Activated CD4-positive, alpha-beta memory T cell treated with anti-CD3 and anti-CD28 coated beads, Interleukin-2, amount 10 ng/mL, durations not matched to agents 7 days and 5 days (primary cell): ENCODE measurements at regions of chr6 and their contacts with region 1.

Region 1: GRCh38 chr6:5302995-5303622 is 41.8 kb downstream of the FARS2 start:
- DNase-seq: peak; percentile 78
- H3K4me3 Mint-ChIP-seq: peak overlapping the region; percentile 62
- H3K27ac Mint-ChIP-seq: peak overlapping the region; percentile 87
- H3K4me1 Mint-ChIP-seq: peaks cover 47% of the 10 kb centered on the region
- H3K27me3 Mint-ChIP-seq: no peaks in the 10 kb centered on the region

Region 2: GRCh38 chr6:5174244-5174643 is 128.9 kb before region 1 on chr6:
- CTCF ChIA-PET with region 1: interaction called, 15 read pairs
- POLR2A ChIA-PET with region 1: interaction called, 20 read pairs
- DNase-seq: peak; percentile 79
- H3K4me3 Mint-ChIP-seq: peak overlapping the region; percentile 57
- H3K27ac Mint-ChIP-seq: peak overlapping the region; percentile 89
- H3K4me1 Mint-ChIP-seq: peaks cover 50% of the 10 kb centered on the region
- H3K27me3 Mint-ChIP-seq: no peaks in the 10 kb centered on the region

Region 3: GRCh38 chr6:5214570-5215052 is 88.5 kb before region 1 on chr6:
- CTCF ChIA-PET with region 1: interaction called, 12 read pairs
- POLR2A ChIA-PET with region 1: interaction called, 6 read pairs
- DNase-seq: peak; percentile 42
- H3K4me3 Mint-ChIP-seq: no peak overlapping the region
- H3K27ac Mint-ChIP-seq: no peak overlapping the region
- H3K4me1 Mint-ChIP-seq: peaks cover 9% of the 10 kb centered on the region
- H3K27me3 Mint-ChIP-seq: no peaks in the 10 kb centered on the region

Region 4: DNA sequence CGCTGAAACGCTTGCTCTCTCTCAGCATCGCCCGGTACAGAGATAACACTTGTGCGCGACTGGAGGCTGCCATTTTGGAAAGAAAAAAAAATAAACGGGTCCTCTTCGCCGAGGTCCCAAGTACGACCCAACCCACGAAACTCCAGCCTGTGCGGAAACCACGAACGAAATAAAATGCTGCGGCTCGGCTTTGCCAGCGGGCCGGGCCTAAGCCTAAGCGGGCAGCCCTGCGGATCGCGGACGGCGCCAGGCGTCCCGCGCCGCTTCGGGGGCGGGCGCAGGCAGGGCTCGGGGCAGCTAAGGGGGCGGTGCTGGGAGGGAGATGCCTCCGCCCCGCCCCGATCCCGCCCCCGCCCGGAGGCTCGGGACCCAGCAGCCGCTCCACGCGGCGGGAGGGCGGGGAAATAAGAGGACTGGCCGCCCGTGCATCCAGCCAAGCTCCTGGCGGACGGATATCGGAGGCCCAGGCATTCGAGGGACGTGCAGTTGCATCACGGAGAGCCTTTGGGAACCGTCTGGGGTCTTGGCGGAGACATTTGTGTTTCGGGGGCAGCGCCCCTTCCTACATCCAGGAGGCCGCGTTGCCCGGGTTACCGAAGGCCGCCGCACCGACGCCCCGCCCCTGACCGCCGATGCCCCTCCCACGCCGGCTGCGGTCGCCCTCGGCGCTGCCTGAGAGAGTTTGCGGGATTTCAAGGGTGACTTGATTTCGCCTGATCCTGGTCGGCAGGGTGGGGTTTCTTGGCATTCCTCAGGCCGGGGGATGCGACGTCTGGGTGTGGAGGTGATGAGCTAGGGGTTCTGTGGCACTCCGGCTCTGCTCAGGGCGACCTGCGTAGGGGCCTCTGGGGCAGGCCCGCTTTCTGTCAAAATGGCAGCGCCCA is 42.2 kb before region 1 on chr6 and contains the starts of genes FARS2 and LYRM4:
- CTCF ChIA-PET with region 1: interaction called, 15 read pairs
- POLR2A ChIA-PET with region 1: interaction called, 50 read pairs
- DNase-seq: peak; percentile 91
- H3K4me3 Mint-ChIP-seq: peak within 1 kb of the TSS; percentile 99
- H3K27ac Mint-ChIP-seq: peak within 1 kb of the TSS; percentile 96
- H3K4me1 Mint-ChIP-seq: peaks cover 60% of the 10 kb centered on the region
- H3K27me3 Mint-ChIP-seq: no peaks in the 10 kb centered on the region
- total RNA-seq, gene FARS2: 17.6 to 18.7 TPM
- total RNA-seq, gene LYRM4: 21.2 to 22.7 TPM

Region 5: DNA sequence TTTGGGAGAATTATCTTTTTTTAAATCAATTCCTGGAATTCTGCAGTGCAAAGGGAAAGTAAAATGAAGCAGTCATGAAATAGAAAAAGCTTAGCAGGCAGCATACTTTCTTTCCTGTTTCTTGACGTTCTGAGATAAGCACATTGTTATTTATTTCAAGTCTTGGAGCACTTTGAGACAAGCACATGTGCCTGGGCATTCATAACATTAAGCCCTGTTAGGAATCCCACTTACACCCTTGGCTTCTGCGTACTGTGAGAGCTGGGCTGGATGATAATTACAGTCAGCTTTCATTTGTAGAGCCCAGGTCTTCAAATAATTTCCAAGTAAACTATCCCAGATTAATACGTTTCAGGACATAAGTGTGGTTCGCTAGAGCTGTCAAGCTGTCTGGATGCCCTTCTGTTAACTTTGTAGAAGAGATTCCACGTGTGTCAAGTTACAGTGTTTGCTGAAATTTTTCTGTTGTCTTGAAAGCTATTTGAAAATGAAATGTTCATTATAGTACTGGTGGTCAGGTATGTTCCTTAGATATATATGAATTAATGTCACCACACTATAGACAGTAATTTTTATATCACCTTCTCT is 32.9 kb before region 1 on chr6:
- CTCF ChIA-PET with region 1: interaction called, 19 read pairs
- POLR2A ChIA-PET with region 1: interaction called, 12 read pairs
- DNase-seq: no peak
- H3K4me3 Mint-ChIP-seq: no peak overlapping the region
- H3K27ac Mint-ChIP-seq: peak overlapping the region; percentile 30
- H3K4me1 Mint-ChIP-seq: peaks cover 69% of the 10 kb centered on the region
- H3K27me3 Mint-ChIP-seq: no peaks in the 10 kb centered on the region

Region 6: DNA sequence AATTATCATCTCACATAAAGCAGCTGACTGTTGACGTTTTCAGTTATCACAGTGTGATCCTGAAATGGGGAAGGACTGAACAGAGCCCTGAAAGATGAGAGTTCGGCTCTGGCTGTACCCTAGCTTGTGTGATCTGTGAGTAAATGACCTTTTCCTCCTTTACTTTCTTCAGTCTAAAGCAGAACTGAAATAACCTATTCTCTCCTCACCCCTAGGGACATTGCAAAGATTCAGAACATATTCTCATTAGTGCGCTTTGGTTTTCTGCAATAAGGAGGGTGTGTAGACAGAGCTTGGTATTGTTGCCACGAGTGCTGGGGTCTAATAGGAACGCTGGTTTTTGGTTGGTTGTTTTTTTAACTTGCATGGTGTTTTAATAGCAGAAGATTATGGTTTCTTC is 25.1 kb before region 1 on chr6:
- CTCF ChIA-PET with region 1: interaction called, 19 read pairs
- POLR2A ChIA-PET with region 1: interaction called, 33 read pairs
- DNase-seq: no peak
- H3K4me3 Mint-ChIP-seq: no peak overlapping the region
- H3K27ac Mint-ChIP-seq: peak overlapping the region; percentile 63
- H3K4me1 Mint-ChIP-seq: peaks cover 84% of the 10 kb centered on the region
- H3K27me3 Mint-ChIP-seq: no peaks in the 10 kb centered on the region

Region 7: DNA sequence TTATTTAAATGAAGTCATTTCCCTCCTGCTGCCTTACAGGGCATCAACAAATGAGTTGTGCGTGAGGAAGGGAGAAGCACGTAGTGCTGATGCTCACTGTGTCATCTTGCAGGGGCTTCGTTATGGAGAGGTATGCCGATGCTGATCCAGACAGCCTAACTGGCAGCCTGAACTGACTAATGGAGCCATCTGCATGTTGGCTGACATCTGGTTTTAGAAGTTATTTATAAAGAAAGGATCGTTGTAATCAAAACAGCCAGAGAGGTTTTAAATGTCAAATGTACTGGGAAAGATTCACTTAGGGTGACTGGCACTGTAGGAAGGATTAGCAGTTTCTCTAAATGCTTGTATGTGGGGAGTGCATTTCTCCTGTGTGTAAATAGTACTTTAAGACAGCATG is 12.8 kb after region 1 on chr6:
- CTCF ChIA-PET with region 1: interaction called, 10 read pairs
- POLR2A ChIA-PET with region 1: no interaction called
- DNase-seq: no peak
- H3K4me3 Mint-ChIP-seq: no peak overlapping the region
- H3K27ac Mint-ChIP-seq: no peak overlapping the region
- H3K4me1 Mint-ChIP-seq: peaks cover 3% of the 10 kb centered on the region
- H3K27me3 Mint-ChIP-seq: no peaks in the 10 kb centered on the region

Region 8: DNA sequence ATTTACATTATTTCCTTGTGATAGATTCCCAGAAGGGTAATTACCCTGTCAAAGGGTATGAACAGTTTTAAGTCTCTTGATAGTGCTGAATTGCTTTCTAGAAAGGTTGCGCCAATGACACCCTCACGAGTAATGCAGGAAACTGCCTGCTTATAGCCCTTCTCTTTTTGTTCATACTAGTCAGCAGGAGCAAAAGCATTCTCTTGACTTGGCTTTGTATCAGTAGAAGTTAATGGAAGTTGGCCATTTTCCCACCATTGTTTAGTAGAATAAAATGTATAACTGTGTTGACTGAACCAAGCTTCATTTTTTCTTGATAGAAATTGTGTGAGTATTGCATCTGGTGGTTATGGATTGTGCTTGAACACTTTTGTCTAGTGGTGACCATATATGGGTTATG is 58.3 kb after region 1 on chr6:
- CTCF ChIA-PET with region 1: no interaction called
- POLR2A ChIA-PET with region 1: no interaction called
- DNase-seq: no peak
- H3K4me3 Mint-ChIP-seq: no peak overlapping the region
- H3K27ac Mint-ChIP-seq: no peak overlapping the region
- H3K4me1 Mint-ChIP-seq: no peaks in the 10 kb centered on the region
- H3K27me3 Mint-ChIP-seq: no peaks in the 10 kb centered on the region